Heart left ventricle (tissue), 16 donors: ENCODE measurements at regions of chr15 and their contacts with region 1.

Region 1: DNA sequence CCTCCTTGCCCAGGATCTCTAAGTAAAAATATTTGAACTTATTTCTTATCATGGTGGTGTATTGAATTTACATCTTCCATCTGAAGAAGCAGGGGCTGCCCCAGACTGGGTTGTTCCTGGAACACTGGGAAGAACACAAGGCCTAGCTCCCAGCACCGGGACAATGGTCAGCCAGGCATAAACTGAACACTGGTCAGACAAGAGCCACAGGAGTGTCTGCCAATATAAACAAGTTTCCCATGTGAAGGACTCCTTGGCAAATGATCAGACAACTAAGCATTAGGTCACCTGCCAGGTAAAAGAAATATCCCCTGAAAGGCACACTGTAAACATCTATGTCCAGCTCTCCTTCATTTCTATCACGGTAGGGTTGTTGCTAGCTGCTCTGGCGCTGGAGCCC is 172.3 kb downstream of the ATP8B4 start:
- DNase-seq: no peak
- ATAC-seq: no peak
- H3K4me3 ChIP-seq: no peak overlapping the region
- H3K27ac ChIP-seq: no peak overlapping the region
- H3K4me1 ChIP-seq: no peaks in the 10 kb centered on the region
- H3K27me3 ChIP-seq: no peaks in the 10 kb centered on the region
- CTCF ChIP-seq: no peak
- POLR2A ChIP-seq: no peak

Region 2: GRCh38 chr15:49758856-49759255 is 187.8 kb before region 1 on chr15:
- intact Hi-C with region 1: no loop called
- DNase-seq: no peak
- ATAC-seq: no peak
- H3K4me3 ChIP-seq: no peak overlapping the region
- H3K27ac ChIP-seq: peak overlapping the region in 2 of 12 donors; percentile 17 to 24
- H3K4me1 ChIP-seq: no peaks in the 10 kb centered on the region
- H3K27me3 ChIP-seq: no peaks in the 10 kb centered on the region
- CTCF ChIP-seq: no peak
- POLR2A ChIP-seq: no peak

Region 3: DNA sequence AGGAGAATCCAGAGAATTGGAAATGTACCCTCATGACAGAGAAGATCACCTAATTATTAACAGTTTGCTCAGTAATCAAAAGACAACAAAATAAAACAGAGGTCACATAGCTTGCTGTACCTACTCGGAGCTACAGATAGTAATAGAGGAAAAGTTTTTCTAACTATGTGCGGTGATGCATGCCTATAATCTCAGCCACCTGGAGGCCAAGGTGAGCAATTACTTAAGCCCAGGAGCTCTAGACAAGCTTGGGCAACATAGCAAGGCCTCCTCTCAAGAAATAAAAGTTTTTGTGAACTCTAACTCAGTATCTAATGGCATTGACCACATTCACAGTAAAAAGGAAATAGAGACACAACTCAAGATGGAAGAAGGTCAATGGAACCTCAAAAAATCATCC is 71.3 kb before region 1 on chr15:
- intact Hi-C with region 1: no loop called
- DNase-seq: no peak
- ATAC-seq: no peak
- H3K4me3 ChIP-seq: peak overlapping the region in 2 of 12 donors; percentile 1 to 20
- H3K27ac ChIP-seq: peak overlapping the region; percentile 29 to 88 (median 78)
- H3K4me1 ChIP-seq: peaks cover 0 to 34% (median 5%) of the 10 kb centered on the region in 12 donors
- H3K27me3 ChIP-seq: no peaks in the 10 kb centered on the region
- CTCF ChIP-seq: no peak
- POLR2A ChIP-seq: no peak

Region 4: DNA sequence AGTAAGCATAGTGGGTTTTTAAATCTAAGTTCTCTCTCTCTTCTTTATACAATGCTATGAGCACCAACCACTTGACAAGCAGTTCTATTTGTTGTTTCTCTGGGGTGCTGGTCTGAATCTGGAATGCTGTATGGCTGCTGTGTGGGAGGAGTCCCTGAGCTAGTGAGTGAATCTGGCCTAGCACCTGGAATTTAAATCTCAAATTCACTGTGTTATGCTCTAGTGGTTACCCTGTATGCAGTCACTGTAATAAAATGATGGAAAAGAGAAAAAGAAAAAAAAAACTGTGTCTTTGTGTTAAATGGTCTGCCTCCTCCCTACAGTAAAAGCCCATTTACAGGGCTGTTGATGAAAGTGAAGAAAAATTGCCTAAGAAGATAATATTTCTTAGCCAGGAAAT is 17.4 kb after region 1 on chr15:
- intact Hi-C with region 1: loop called in 1 of 10 experiments (anchors 2 kb)
- DNase-seq: no peak
- ATAC-seq: no peak
- H3K4me3 ChIP-seq: no peak overlapping the region
- H3K27ac ChIP-seq: peak overlapping the region in 2 of 12 donors; percentile 17 to 46
- H3K4me1 ChIP-seq: peaks cover 0 to 8% (median 0%) of the 10 kb centered on the region in 12 donors
- H3K27me3 ChIP-seq: no peaks in the 10 kb centered on the region
- CTCF ChIP-seq: no peak
- POLR2A ChIP-seq: no peak